Caco-2 (cell line): ENCODE measurements at regions of chr10 and their contacts with region 1.

Region 1: DNA sequence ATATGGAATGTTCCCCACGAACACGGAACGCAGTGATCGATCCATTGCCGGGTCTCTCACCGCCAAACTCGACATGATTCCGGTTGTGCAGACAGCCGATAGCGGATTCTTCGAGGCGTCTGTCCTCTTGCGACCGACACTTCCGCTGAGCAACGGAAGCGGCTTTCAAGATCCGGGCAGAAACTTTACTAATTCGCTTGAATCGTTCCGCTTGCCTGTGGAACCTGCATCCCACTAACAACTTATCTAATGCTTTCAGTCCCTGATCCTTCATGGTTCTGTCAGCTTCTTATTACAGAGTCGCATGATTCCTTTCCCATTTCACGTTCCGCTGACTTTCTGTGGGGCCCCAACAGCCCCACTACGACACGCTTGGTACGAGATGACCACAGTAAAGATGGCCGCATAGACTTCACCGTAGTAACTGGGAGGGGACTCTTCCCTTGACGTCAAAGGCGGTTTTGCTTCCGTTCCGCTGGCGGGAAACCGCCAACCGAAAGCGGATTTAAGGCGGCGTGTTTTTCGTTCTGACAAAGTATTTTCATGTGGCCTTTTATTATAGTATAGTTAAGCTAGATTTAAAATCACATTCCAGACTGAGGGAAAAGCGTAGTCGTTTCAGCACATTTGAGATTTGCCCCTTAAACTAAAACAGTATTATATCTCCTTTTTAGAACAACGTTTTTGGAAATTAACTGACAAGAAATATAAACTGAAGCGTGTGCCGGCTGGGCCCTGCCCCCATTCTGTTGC is at the start of gene CSTF2T:
- DNase-seq: peak; percentile 94 to 95
- H3K4me3 ChIP-seq: peak within 1 kb of the TSS; percentile 71
- H3K4me3 Mint-ChIP-seq: peak within 1 kb of the TSS; percentile 92
- H3K27ac Mint-ChIP-seq: peak within 1 kb of the TSS; percentile 99
- H3K4me1 ChIP-seq: peaks cover 8% of the 10 kb centered on the region
- H3K4me1 Mint-ChIP-seq: peaks cover 12% of the 10 kb centered on the region
- H3K27me3 ChIP-seq: no peaks in the 10 kb centered on the region
- H3K27me3 Mint-ChIP-seq: no peaks in the 10 kb centered on the region
- CTCF ChIP-seq: no peak
- total RNA-seq, gene CSTF2T: 48.8 and 51.2 TPM in 2 replicates

Region 2: GRCh38 chr10:51585742-51586141 is 113.9 kb before region 1 on chr10:
- CTCF ChIA-PET with region 1: no interaction called
- POLR2A ChIA-PET with region 1: no interaction called
- intact Hi-C with region 1: loop called (anchors 5 kb)
- DNase-seq: peak; percentile 42 to 52
- H3K4me3 ChIP-seq: no peak overlapping the region
- H3K4me3 Mint-ChIP-seq: no peak overlapping the region
- H3K27ac Mint-ChIP-seq: no peak overlapping the region
- H3K4me1 ChIP-seq: no peaks in the 10 kb centered on the region
- H3K4me1 Mint-ChIP-seq: peaks cover 11% of the 10 kb centered on the region
- H3K27me3 ChIP-seq: no peaks in the 10 kb centered on the region
- H3K27me3 Mint-ChIP-seq: peaks cover under 1% of the 10 kb centered on the region
- CTCF ChIP-seq: no peak

Region 3: DNA sequence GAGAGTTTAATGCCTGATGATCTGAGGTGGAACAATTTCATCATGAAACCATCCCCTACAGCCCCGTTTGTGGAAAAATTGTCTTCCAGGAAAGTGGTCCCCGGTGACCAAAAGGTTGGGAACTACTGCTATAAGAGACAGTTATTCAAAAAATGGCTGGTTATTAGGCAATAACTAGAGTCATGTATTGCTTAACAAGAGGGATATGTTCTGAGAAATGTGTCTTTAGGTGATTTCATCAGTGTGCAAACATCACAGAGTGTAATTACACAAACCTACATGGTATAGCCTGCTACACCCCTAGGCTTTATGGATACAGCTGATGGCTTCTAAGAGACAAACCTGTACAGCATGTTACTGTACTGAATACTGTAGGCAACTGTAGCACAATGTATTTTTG is 71.0 kb after region 1 on chr10:
- CTCF ChIA-PET with region 1: no interaction called
- POLR2A ChIA-PET with region 1: no interaction called
- intact Hi-C with region 1: loop called (anchors 2 kb)
- DNase-seq: peak in 1 of 2 experiments; percentile 52
- H3K4me3 ChIP-seq: no peak overlapping the region
- H3K4me3 Mint-ChIP-seq: no peak overlapping the region
- H3K27ac Mint-ChIP-seq: no peak overlapping the region
- H3K4me1 ChIP-seq: peaks cover 6% of the 10 kb centered on the region; the same call in 1 of the 2 replicates
- H3K4me1 Mint-ChIP-seq: peaks cover 6% of the 10 kb centered on the region
- H3K27me3 ChIP-seq: no peaks in the 10 kb centered on the region
- H3K27me3 Mint-ChIP-seq: no peaks in the 10 kb centered on the region
- CTCF ChIP-seq: no peak